ENCODE measurements at regions of chr9 and their contacts with region 1.

Region 1: GRCh38 chr9:131650254-131650653 is 89.6 kb downstream of the RAPGEF1 start:
- DNase-seq: no peak
- H3K4me3 Mint-ChIP-seq: no peak overlapping the region
- H3K27ac Mint-ChIP-seq: peak overlapping the region; percentile 71
- H3K4me1 Mint-ChIP-seq: peaks cover 73% of the 10 kb centered on the region
- H3K27me3 Mint-ChIP-seq: no peaks in the 10 kb centered on the region

Region 2: GRCh38 chr9:131635285-131635684 is 15.0 kb before region 1 on chr9:
- intact Hi-C with region 1: loop called (anchors 1 kb)
- DNase-seq: peak; percentile 74
- H3K4me3 Mint-ChIP-seq: peak overlapping the region; percentile 33
- H3K27ac Mint-ChIP-seq: peak overlapping the region; percentile 85
- H3K4me1 Mint-ChIP-seq: peaks cover 78% of the 10 kb centered on the region
- H3K27me3 Mint-ChIP-seq: peaks cover 2% of the 10 kb centered on the region

Region 3: DNA sequence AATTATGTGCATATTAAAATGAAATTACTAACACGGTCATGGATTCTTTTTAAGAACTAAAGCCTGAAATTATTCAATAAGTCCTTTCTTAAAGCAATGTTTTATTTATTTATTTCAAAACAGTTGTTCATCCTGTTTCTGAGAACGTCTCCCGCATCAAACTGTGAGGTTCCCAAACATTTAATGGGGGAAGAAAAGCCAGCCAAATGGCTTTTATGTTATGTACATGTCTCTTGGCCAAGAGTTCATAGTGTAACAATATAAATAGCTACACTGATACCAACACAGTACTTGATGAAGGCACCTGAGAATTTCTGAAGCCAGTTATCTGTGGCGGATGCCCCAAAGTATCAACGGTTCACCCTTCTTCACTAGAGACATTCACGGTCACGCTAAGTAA is 740.7 kb after region 1 on chr9:
- intact Hi-C with region 1: no loop called
- DNase-seq: no peak
- H3K4me3 Mint-ChIP-seq: no peak overlapping the region
- H3K27ac Mint-ChIP-seq: no peak overlapping the region
- H3K4me1 Mint-ChIP-seq: no peaks in the 10 kb centered on the region
- H3K27me3 Mint-ChIP-seq: no peaks in the 10 kb centered on the region